Pancreas (tissue), 10 donors: ENCODE measurements at regions of chr9 and their contacts with region 1.

Region 1: GRCh38 chr9:107239474-107239873 is 43.6 kb upstream of the RAD23B start:
- DNase-seq: no peak
- ATAC-seq: peak in 3 of 4 donors; percentile 52 to 69 (median 55)
- H3K4me3 ChIP-seq: no peak overlapping the region
- H3K27ac ChIP-seq: no peak overlapping the region
- H3K4me1 ChIP-seq: peaks cover 11 to 15% (median 13%) of the 10 kb centered on the region in 3 donors
- H3K27me3 ChIP-seq: no peaks in the 10 kb centered on the region
- CTCF ChIP-seq: no peak

Region 2: GRCh38 chr9:107340920-107341632 is 101.6 kb after region 1 on chr9:
- intact Hi-C with region 1: loop called in 1 of 3 experiments (anchors 10 kb)
- DNase-seq: peak; percentile 69 to 96 (median 83)
- ATAC-seq: peak; percentile 73 to 92 (median 87)
- H3K4me3 ChIP-seq: no peak overlapping the region
- H3K27ac ChIP-seq: no peak overlapping the region
- H3K4me1 ChIP-seq: peaks cover 0 to 15% (median 0%) of the 10 kb centered on the region in 3 donors
- H3K27me3 ChIP-seq: no peaks in the 10 kb centered on the region
- CTCF ChIP-seq: peak; percentile 65 to 91 (median 82)